K562 (cell line): ENCODE measurements at regions of chr10 and their contacts with region 1.

Region 1: GRCh38 chr10:9877978-9878377 is 1139.7 kb upstream of the CELF2 start:
- DNase-seq: peak; percentile 29 to 82 (median 58)
- ATAC-seq: peak; percentile 83
- H3K4me3 ChIP-seq: peak overlapping the region; percentile 59
- H3K27ac ChIP-seq: peak overlapping the region; percentile 79
- H3K4me1 ChIP-seq: peaks cover 0 to 3% of the 10 kb centered on the region in 2 experiments; a peak in 1 of 5 replicates
- H3K27me3 ChIP-seq: no peaks in the 10 kb centered on the region
- CTCF ChIP-seq: no peak
- EP300 ChIP-seq: no peak
- POLR2A ChIP-seq: peak; percentile 43
- RAD21 ChIP-seq: no peak

Region 2: GRCh38 chr10:9825491-9826018 is 52.4 kb before region 1 on chr10:
- CTCF ChIA-PET with region 1: no interaction called
- POLR2A ChIA-PET with region 1: no interaction called
- in situ Hi-C with region 1: no loop called
- intact Hi-C with region 1: loop called (anchors 5 kb)
- DNase-seq: peak; percentile 46 to 88 (median 62)
- ATAC-seq: peak; percentile 90
- H3K4me3 ChIP-seq: no peak overlapping the region
- H3K27ac ChIP-seq: peak overlapping the region; percentile 52
- H3K4me1 ChIP-seq: peaks cover 0 to 18% of the 10 kb centered on the region in 2 experiments; a peak in 4 of 5 replicates
- H3K27me3 ChIP-seq: no peaks in the 10 kb centered on the region
- CTCF ChIP-seq: no peak
- EP300 ChIP-seq: peak; percentile 90
- POLR2A ChIP-seq: no peak
- RAD21 ChIP-seq: 0 out of 4 replicates have a peak, but pooled peaks have one; percentile 11 to 19

Region 3: GRCh38 chr10:10096296-10096695 is 218.3 kb after region 1 on chr10:
- CTCF ChIA-PET with region 1: no interaction called
- POLR2A ChIA-PET with region 1: no interaction called
- in situ Hi-C with region 1: no loop called
- intact Hi-C with region 1: no loop called
- DNase-seq: no peak
- ATAC-seq: no peak
- H3K4me3 ChIP-seq: no peak overlapping the region
- H3K27ac ChIP-seq: no peak overlapping the region
- H3K4me1 ChIP-seq: no peaks in the 10 kb centered on the region
- H3K27me3 ChIP-seq: no peaks in the 10 kb centered on the region
- CTCF ChIP-seq: no peak
- EP300 ChIP-seq: no peak
- POLR2A ChIP-seq: no peak
- RAD21 ChIP-seq: no peak